H1 (cell line): ENCODE measurements at regions of chr2 and their contacts with region 1.

Region 1: DNA sequence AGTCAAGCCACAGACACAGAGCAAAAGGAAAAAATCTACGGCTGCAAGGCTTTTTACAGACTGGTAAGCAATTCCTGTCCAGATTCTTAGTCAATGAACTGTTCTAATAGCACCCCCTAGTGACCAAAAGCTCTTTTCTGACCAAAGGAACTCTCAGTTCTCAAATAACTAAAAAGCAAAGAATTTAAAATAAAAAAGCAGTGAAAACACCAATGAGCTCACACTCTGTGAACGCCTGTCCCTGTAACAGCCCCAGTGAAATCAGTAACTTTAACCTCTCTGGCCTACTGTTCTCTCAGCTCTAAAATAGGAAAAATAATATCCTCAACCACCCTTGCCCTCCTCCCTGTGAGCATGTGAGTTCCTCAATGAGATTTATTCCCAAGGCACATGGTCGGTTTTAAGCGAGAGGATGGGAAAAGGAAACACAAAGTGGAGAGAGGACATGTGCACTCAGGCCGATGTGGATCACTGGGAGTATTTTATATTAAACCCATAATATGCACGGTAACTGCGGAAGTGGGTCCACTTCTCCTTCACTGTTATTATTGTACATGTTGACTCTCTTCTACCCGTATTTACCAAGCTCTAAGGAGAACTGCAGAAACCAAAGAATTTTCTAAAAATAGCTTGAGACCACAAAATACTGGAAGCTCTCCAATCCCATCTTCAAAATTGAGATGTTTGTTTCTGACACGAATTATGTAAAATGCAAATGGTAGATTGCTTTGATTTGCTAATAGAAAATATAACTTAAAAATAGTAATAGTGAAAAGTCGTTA is 128.5 kb downstream of the STK39 start:
- DNase-seq: peak in 1 of 2 experiments; percentile 52
- H3K4me3 ChIP-seq: no peak overlapping the region
- H3K27ac ChIP-seq: no peak overlapping the region
- H3K4me1 ChIP-seq: peaks cover 0 to 13% (median 7%) of the 10 kb centered on the region in 4 experiments; a peak in 4 of 7 replicates
- H3K27me3 ChIP-seq: no peaks in the 10 kb centered on the region
- CTCF ChIP-seq: peak in 2 of 3 experiments; percentile 58 to 60; a peak in 3 of 4 replicates
- EP300 ChIP-seq: no peak
- POLR2A ChIP-seq: no peak
- RAD21 ChIP-seq: peak; percentile 85 to 89

Region 2: DNA sequence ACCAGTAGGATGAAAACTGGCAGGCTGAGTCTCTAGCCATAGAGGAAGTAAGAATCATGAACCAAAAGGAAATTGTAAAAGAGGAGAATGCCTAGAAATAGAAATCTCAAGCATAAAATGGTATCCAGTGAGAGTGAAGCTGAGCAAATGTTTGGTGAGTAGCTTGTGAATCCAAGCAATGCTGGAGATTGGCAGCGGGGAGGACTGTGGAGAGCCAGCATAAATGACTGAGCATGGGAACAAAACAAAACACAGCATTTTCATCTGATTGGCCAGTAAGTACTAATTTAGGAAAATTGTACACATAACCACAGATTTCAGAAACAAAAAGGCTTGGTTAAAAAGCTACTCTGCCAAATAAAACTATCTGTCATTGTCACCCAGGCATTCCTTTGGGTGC is 261.5 kb before region 1 on chr2:
- CTCF ChIA-PET with region 1: interaction called, 11 read pairs
- POLR2A ChIA-PET with region 1: no interaction called
- DNase-seq: no peak
- H3K4me3 ChIP-seq: no peak overlapping the region
- H3K27ac ChIP-seq: no peak overlapping the region
- H3K4me1 ChIP-seq: peaks cover 0 to 18% (median 3%) of the 10 kb centered on the region in 4 experiments; a peak in 5 of 7 replicates
- H3K27me3 ChIP-seq: no peaks in the 10 kb centered on the region
- CTCF ChIP-seq: no peak
- EP300 ChIP-seq: no peak
- POLR2A ChIP-seq: no peak
- RAD21 ChIP-seq: no peak

Region 3: DNA sequence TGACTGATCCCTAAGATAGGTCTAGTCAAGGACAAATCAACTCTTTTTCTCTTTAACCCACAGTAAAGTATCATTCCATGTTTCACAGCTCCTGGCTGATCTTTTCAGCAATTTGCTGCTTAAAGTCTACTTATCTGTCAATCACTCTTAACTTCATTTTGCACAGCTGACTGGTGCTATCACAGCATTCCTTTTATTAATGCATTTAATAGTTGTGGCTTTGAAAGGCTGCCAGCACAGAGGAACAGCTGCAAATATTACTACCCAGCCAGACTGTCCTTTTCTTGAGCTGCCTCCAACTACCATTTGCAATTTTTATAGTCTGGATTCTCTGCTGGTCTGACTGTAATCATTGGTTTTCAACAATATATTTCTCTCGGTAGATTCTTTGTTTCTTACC is 175.0 kb before region 1 on chr2:
- CTCF ChIA-PET with region 1: interaction called, 14 read pairs
- POLR2A ChIA-PET with region 1: no interaction called
- DNase-seq: no peak
- H3K4me3 ChIP-seq: no peak overlapping the region
- H3K27ac ChIP-seq: no peak overlapping the region
- H3K4me1 ChIP-seq: peaks cover 0 to 7% (median 5%) of the 10 kb centered on the region in 4 experiments; a peak in 6 of 7 replicates
- H3K27me3 ChIP-seq: no peaks in the 10 kb centered on the region
- CTCF ChIP-seq: no peak
- EP300 ChIP-seq: no peak
- POLR2A ChIP-seq: no peak
- RAD21 ChIP-seq: no peak

Region 4: GRCh38 chr2:168029071-168029470 is 89.9 kb before region 1 on chr2:
- CTCF ChIA-PET with region 1: interaction called, 11 read pairs
- POLR2A ChIA-PET with region 1: no interaction called
- DNase-seq: no peak
- H3K4me3 ChIP-seq: no peak overlapping the region
- H3K27ac ChIP-seq: no peak overlapping the region
- H3K4me1 ChIP-seq: no peaks in the 10 kb centered on the region
- H3K27me3 ChIP-seq: peaks cover 0 to 2% (median 0%) of the 10 kb centered on the region in 4 experiments; a peak in 1 of 7 replicates
- CTCF ChIP-seq: no peak
- EP300 ChIP-seq: no peak
- POLR2A ChIP-seq: no peak
- RAD21 ChIP-seq: no peak

Region 5: GRCh38 chr2:168075446-168075845 is 43.5 kb before region 1 on chr2:
- CTCF ChIA-PET with region 1: interaction called, 32 read pairs
- POLR2A ChIA-PET with region 1: no interaction called
- DNase-seq: no peak
- H3K4me3 ChIP-seq: no peak overlapping the region
- H3K27ac ChIP-seq: no peak overlapping the region
- H3K4me1 ChIP-seq: no peaks in the 10 kb centered on the region
- H3K27me3 ChIP-seq: no peaks in the 10 kb centered on the region
- CTCF ChIP-seq: no peak
- EP300 ChIP-seq: no peak
- POLR2A ChIP-seq: no peak
- RAD21 ChIP-seq: no peak

Region 6: GRCh38 chr2:168130346-168130745 is 11.4 kb after region 1 on chr2:
- CTCF ChIA-PET with region 1: interaction called, 76 read pairs
- POLR2A ChIA-PET with region 1: no interaction called
- DNase-seq: no peak
- H3K4me3 ChIP-seq: no peak overlapping the region
- H3K27ac ChIP-seq: no peak overlapping the region
- H3K4me1 ChIP-seq: no peaks in the 10 kb centered on the region
- H3K27me3 ChIP-seq: no peaks in the 10 kb centered on the region
- CTCF ChIP-seq: no peak
- EP300 ChIP-seq: no peak
- POLR2A ChIP-seq: no peak
- RAD21 ChIP-seq: no peak

Region 7: GRCh38 chr2:168171059-168171762 is 52.3 kb after region 1 on chr2:
- CTCF ChIA-PET with region 1: no interaction called
- POLR2A ChIA-PET with region 1: no interaction called
- DNase-seq: no peak
- H3K4me3 ChIP-seq: no peak overlapping the region
- H3K27ac ChIP-seq: no peak overlapping the region
- H3K4me1 ChIP-seq: peaks cover 0 to 6% (median 1%) of the 10 kb centered on the region in 4 experiments; a peak in 3 of 7 replicates
- H3K27me3 ChIP-seq: no peaks in the 10 kb centered on the region
- CTCF ChIP-seq: no peak
- EP300 ChIP-seq: no peak
- POLR2A ChIP-seq: no peak
- RAD21 ChIP-seq: no peak

Region 8: DNA sequence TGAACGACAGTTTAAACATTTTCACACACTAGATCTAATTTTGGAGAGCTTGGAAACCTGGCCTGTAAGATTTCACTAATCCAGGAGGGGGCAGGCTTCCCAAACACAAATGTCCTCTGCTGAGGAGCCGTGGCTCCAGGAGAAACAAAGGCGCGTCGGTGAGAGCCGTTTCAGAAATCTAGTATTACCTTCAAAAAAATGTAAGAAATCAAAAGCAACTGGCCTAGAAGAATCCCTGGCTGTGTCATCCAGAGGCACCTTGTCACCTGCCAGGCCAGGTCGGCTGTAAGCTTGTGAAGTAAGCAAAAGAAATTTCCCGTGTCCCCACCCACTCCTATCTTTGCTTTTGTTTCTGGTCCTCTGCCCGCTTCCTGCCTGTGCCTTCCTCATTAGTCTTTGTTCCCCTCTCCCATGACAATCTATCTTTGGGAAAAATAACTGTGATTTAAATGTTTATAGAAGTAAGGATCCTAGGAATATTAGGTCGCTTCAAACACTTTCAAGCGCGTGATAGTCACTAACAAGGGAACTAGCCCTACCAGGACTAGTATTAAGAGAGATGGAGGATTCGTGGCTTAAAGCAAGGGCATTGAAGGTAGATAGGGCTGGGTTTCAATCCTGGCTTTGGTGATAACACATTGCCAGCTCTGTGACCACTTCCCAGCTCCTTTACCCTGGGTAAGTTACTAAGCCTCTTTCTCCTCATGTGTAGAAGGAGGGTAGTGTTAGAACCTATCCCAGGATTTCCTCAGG is 228.0 kb after region 1 on chr2:
- CTCF ChIA-PET with region 1: no interaction called
- POLR2A ChIA-PET with region 1: no interaction called
- DNase-seq: peak; percentile 33 to 83
- H3K4me3 ChIP-seq: peak overlapping the region; percentile 28 to 57 (median 39); a peak in 6 of 8 replicates
- H3K27ac ChIP-seq: no peak overlapping the region; the same call in 1 of the 2 replicates
- H3K4me1 ChIP-seq: peaks cover 0 to 6% (median 1%) of the 10 kb centered on the region in 4 experiments; a peak in 3 of 7 replicates
- H3K27me3 ChIP-seq: no peaks in the 10 kb centered on the region
- CTCF ChIP-seq: peak; percentile 20 to 75 (median 67)
- EP300 ChIP-seq: no peak
- POLR2A ChIP-seq: 0 out of 3 replicates have a peak, but pooled peaks of 1 of the 2 experiments have one; percentile 26
- RAD21 ChIP-seq: peak; percentile 93

Region 9: DNA sequence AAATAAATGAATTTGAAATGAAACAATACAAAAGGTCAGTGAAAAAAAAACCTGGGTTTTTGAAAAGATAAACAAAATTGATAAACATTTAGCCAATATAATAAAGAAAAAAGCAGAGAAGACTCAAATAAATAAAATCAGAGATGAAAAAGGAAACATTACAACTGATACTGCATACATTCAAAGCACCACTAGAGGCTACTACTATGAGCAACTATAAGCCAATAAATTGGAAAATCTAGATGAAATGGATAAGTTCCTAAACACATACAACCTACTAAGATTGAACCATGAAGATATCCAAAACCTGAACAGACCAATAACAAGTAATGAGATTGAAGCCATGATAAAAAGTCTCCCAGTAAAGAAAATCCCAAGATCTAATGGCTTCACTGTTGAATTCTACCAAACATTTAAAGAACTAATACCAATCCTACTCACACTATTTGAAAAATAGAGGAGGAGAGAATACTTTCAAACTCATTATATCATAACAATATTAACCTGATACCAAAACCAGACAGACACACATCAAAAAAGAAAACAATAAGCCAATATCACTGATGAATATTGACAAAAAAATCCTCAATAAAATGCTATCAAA is 256.4 kb after region 1 on chr2:
- CTCF ChIA-PET with region 1: no interaction called
- POLR2A ChIA-PET with region 1: no interaction called
- DNase-seq: no peak
- H3K4me3 ChIP-seq: no peak overlapping the region
- H3K27ac ChIP-seq: no peak overlapping the region
- H3K4me1 ChIP-seq: no peaks in the 10 kb centered on the region
- H3K27me3 ChIP-seq: no peaks in the 10 kb centered on the region
- CTCF ChIP-seq: no peak
- EP300 ChIP-seq: no peak
- POLR2A ChIP-seq: no peak
- RAD21 ChIP-seq: no peak

Region 10: GRCh38 chr2:168819050-168819715 is 700.3 kb after region 1 on chr2:
- CTCF ChIA-PET with region 1: no interaction called
- POLR2A ChIA-PET with region 1: no interaction called
- DNase-seq: no peak
- H3K4me3 ChIP-seq: no peak overlapping the region
- H3K27ac ChIP-seq: no peak overlapping the region
- H3K4me1 ChIP-seq: peaks cover 0 to 3% (median 0%) of the 10 kb centered on the region in 4 experiments; a peak in 1 of 7 replicates
- H3K27me3 ChIP-seq: peaks cover 0 to 1% (median 0%) of the 10 kb centered on the region in 4 experiments; a peak in 1 of 7 replicates
- CTCF ChIP-seq: no peak
- EP300 ChIP-seq: no peak
- POLR2A ChIP-seq: no peak
- RAD21 ChIP-seq: no peak